ENCODE measurements at regions of chrX and their contacts with region 1.

Region 1: GRCh38 chrX:44244008-44244407 is 99.5 kb downstream of the EFHC2 start:
- DNase-seq: peak; percentile 26
- H3K4me3 ChIP-seq: no peak overlapping the region
- H3K27ac ChIP-seq: no peak overlapping the region
- H3K4me1 ChIP-seq: no peaks in the 10 kb centered on the region
- H3K27me3 ChIP-seq: peaks cover 13% of the 10 kb centered on the region
- CTCF ChIP-seq: peak; percentile 60 to 64

Region 2: DNA sequence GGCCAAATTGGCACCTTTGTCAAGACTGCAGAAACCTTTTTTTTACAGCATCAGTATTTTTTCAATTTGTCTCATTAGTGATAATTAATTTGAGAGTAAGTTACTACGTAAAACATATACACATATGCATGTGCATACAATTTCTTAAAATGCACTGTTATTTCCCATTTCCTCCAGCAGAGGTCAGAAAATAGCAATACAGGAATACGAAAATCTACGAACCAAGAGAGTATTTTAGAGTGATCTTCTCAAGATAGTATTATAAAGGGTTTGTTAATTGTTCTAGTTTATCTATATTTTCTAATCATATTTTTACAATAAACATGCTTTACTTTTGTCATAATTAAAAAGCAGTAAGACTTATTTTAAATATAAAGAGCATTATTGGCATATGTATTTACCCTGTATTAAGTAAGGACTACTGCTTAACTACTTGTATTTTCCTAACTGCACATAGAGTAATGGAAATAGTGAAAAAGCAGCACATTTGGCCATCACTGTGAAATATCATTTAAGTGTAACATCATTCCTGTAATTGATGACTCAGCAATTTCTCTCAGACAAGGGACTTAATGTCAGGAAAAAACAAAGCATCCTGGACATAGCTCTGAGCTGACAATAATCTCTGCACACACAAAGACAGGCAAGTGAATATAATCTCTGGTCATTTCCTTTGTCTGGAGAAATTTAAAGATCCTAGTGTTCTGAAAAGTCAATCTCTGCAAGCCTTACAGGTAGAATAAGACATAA is 407.4 kb before region 1 on chrX:
- CTCF ChIA-PET with region 1: no interaction called
- dilution Hi-C with region 1: no loop called
- in situ Hi-C with region 1: no loop called
- intact Hi-C with region 1: loop called (anchors 1 kb)
- DNase-seq: peak; percentile 14
- H3K4me3 ChIP-seq: no peak overlapping the region
- H3K27ac ChIP-seq: no peak overlapping the region
- H3K4me1 ChIP-seq: no peaks in the 10 kb centered on the region
- H3K27me3 ChIP-seq: peaks cover 1% of the 10 kb centered on the region
- CTCF ChIP-seq: peak; percentile 58 to 62

Region 3: GRCh38 chrX:44025555-44025954 is 218.5 kb before region 1 on chrX:
- CTCF ChIA-PET with region 1: no interaction called
- dilution Hi-C with region 1: no loop called
- in situ Hi-C with region 1: no loop called
- intact Hi-C with region 1: loop called (anchors 5 kb)
- DNase-seq: no peak
- H3K4me3 ChIP-seq: no peak overlapping the region
- H3K27ac ChIP-seq: no peak overlapping the region
- H3K4me1 ChIP-seq: no peaks in the 10 kb centered on the region
- H3K27me3 ChIP-seq: no peaks in the 10 kb centered on the region
- CTCF ChIP-seq: no peak

Region 4: GRCh38 chrX:44422631-44423030 is 178.6 kb after region 1 on chrX:
- CTCF ChIA-PET with region 1: no interaction called
- dilution Hi-C with region 1: no loop called
- in situ Hi-C with region 1: no loop called
- intact Hi-C with region 1: no loop called
- DNase-seq: no peak
- H3K4me3 ChIP-seq: no peak overlapping the region
- H3K27ac ChIP-seq: no peak overlapping the region
- H3K4me1 ChIP-seq: peaks cover 6% of the 10 kb centered on the region
- H3K27me3 ChIP-seq: no peaks in the 10 kb centered on the region
- CTCF ChIP-seq: no peak

Region 5: DNA sequence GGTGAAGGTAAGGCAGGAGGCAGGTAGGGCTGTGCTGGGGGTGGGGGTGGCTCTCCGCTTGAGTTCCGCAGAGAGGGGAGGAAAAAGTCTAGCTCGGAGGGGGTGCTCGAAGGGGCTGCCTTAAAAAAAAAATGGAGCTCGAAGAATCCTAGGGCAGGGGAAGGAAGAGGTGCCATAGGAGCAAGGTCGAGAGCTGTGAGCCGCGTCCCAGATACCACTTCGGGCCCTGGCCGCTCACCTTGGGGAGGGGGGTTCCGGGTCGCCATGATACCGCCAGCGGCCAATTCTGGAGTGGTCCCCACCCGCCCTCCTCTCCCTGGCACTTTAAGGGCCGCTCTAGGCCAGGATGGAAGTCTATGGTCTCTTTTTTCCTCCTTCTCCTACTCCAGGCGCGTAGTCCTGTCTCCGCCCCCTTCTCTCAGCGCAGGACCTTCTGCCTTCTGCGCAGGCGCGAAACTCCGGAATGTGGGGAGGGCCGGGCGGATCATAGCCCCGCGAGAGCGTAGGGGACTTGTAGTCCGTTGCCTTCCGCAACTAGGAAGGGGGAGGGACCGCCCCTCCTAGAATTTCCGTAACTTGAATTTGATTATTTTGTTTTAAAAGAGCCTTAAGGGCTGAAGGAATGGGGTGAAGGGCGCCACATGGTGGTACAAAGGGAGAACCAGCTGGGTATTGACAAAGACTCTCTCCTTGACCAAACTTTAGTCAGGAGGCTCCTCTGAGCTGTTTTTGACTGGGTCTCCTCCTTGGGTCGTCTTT is 298.7 kb after region 1 on chrX and contains the start of gene FUNDC1:
- CTCF ChIA-PET with region 1: no interaction called
- dilution Hi-C with region 1: no loop called
- in situ Hi-C with region 1: no loop called
- intact Hi-C with region 1: loop called (anchors 10 kb)
- DNase-seq: peak; percentile 91
- H3K4me3 ChIP-seq: peak within 1 kb of the TSS; percentile 63 to 81 (median 79)
- H3K27ac ChIP-seq: peak within 1 kb of the TSS; percentile 72
- H3K4me1 ChIP-seq: peaks cover 4% of the 10 kb centered on the region
- H3K27me3 ChIP-seq: no peaks in the 10 kb centered on the region
- CTCF ChIP-seq: peak in 1 of 2 donors; percentile 55
- total RNA-seq, gene FUNDC1: 14.5 to 16.4 TPM

Region 6: GRCh38 chrX:44570522-44570921 is 326.5 kb after region 1 on chrX:
- CTCF ChIA-PET with region 1: no interaction called
- dilution Hi-C with region 1: no loop called
- in situ Hi-C with region 1: no loop called
- intact Hi-C with region 1: no loop called
- DNase-seq: peak; percentile 28
- H3K4me3 ChIP-seq: no peak overlapping the region
- H3K27ac ChIP-seq: no peak overlapping the region
- H3K4me1 ChIP-seq: no peaks in the 10 kb centered on the region
- H3K27me3 ChIP-seq: no peaks in the 10 kb centered on the region
- CTCF ChIP-seq: no peak

Region 7: DNA sequence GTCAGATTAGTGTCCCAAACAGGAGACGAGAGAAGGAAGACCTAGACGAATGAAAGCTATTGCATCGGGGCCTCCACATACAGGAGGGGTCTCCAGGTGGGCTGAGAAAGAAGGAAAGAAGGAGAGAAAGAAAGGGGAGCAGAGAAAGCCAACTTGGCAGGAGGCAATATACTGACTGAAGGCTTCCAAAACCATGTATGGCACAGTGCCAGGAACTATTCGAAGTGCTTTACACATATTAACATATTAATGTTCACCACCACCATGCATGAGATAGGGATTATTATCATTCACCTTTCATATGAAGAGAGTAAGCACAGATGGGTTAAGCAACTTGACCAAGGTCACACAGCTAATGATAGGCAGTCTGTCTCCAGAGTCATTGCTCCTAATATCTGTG is 401.3 kb after region 1 on chrX:
- CTCF ChIA-PET with region 1: no interaction called
- dilution Hi-C with region 1: no loop called
- in situ Hi-C with region 1: no loop called
- intact Hi-C with region 1: no loop called
- DNase-seq: no peak
- H3K4me3 ChIP-seq: no peak overlapping the region
- H3K27ac ChIP-seq: no peak overlapping the region
- H3K4me1 ChIP-seq: no peaks in the 10 kb centered on the region
- H3K27me3 ChIP-seq: peaks cover 4% of the 10 kb centered on the region
- CTCF ChIP-seq: no peak

Region 8: GRCh38 chrX:44945736-44946135 is 701.7 kb after region 1 on chrX:
- CTCF ChIA-PET with region 1: no interaction called
- dilution Hi-C with region 1: no loop called
- in situ Hi-C with region 1: no loop called
- intact Hi-C with region 1: loop called (anchors 10 kb)
- DNase-seq: no peak
- H3K4me3 ChIP-seq: no peak overlapping the region
- H3K27ac ChIP-seq: no peak overlapping the region
- H3K4me1 ChIP-seq: peaks cover 6% of the 10 kb centered on the region
- H3K27me3 ChIP-seq: no peaks in the 10 kb centered on the region
- CTCF ChIP-seq: peak; percentile 20 to 33

Measured in mammary epithelial cell (primary cell).